MCF 10A (cell line): ENCODE measurements at regions of chr1 and their contacts with region 1.

Region 1: GRCh38 chr1:54950369-54951163 is 29.9 kb upstream of the TMEM61 start:
- DNase-seq: peak; percentile 89
- H3K4me3 Mint-ChIP-seq: no peak overlapping the region
- H3K27ac Mint-ChIP-seq: no peak overlapping the region
- H3K4me1 Mint-ChIP-seq: peaks cover 26% of the 10 kb centered on the region
- H3K27me3 Mint-ChIP-seq: no peaks in the 10 kb centered on the region
- CTCF ChIP-seq: peak; percentile 64

Region 2: DNA sequence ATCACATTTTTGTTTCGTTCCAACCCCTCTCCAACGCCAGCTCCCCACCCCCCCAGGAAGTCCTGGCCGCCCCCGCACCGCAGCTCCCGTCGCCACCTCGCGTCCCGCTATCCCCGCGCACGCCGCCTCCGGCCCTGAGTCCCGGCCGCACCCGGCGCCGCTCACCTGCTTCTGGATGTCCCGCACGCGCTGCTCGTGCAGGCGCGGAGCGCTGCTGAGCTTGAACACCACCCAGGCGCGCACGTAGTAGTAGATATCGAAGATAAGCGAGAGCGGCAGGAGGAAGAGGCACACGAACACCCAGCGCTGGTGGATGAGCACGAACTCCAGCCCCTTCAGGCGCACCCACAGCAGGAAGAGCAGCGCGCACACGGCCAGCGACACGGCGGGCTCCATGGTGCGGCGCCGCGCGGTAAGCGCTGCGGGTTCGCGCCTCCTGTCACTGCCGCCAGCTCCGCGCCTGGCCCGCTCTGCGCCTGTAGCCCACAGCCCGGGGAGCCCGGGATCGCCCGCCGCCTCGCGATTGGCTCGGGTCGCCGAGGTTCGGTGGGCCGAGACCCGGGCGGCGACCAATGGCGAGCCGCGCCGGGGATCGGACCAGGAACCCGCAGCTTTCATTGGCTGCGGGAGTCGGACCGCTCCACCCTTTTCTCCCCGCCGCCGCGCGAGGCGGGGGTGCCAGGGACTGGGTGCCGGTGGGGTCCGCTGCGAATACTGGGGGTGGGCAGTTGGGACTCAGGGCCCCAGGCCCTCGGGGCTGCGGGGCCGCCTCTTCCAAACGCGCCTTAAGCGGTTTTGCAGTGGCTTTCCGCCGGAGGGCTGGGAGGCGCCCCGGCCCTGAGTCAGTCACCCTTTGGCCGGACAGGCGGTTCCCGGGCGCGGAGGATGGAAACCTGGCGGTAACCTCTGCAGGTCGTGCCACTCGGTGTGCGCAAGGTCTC is 63.6 kb before region 1 on chr1 and contains the start of gene DHCR24:
- CTCF ChIA-PET with region 1: interaction called, 58 read pairs
- POLR2A ChIA-PET with region 1: interaction called, 65 read pairs
- intact Hi-C with region 1: loop called (anchors 1 kb)
- DNase-seq: peak; percentile 91
- H3K4me3 Mint-ChIP-seq: peak within 1 kb of the TSS; percentile 99
- H3K27ac Mint-ChIP-seq: peak within 1 kb of the TSS; percentile 90
- H3K4me1 Mint-ChIP-seq: peaks cover 49% of the 10 kb centered on the region
- H3K27me3 Mint-ChIP-seq: no peaks in the 10 kb centered on the region
- CTCF ChIP-seq: no peak
- total RNA-seq, gene DHCR24: 126 and 135 TPM in 2 replicates

Region 3: GRCh38 chr1:54934869-54935268 is 15.7 kb before region 1 on chr1:
- CTCF ChIA-PET with region 1: interaction called, 39 read pairs
- POLR2A ChIA-PET with region 1: interaction called, 5 read pairs
- intact Hi-C with region 1: no loop called
- DNase-seq: no peak
- H3K4me3 Mint-ChIP-seq: no peak overlapping the region
- H3K27ac Mint-ChIP-seq: no peak overlapping the region
- H3K4me1 Mint-ChIP-seq: peaks cover 20% of the 10 kb centered on the region
- H3K27me3 Mint-ChIP-seq: no peaks in the 10 kb centered on the region
- CTCF ChIP-seq: no peak

Region 4: DNA sequence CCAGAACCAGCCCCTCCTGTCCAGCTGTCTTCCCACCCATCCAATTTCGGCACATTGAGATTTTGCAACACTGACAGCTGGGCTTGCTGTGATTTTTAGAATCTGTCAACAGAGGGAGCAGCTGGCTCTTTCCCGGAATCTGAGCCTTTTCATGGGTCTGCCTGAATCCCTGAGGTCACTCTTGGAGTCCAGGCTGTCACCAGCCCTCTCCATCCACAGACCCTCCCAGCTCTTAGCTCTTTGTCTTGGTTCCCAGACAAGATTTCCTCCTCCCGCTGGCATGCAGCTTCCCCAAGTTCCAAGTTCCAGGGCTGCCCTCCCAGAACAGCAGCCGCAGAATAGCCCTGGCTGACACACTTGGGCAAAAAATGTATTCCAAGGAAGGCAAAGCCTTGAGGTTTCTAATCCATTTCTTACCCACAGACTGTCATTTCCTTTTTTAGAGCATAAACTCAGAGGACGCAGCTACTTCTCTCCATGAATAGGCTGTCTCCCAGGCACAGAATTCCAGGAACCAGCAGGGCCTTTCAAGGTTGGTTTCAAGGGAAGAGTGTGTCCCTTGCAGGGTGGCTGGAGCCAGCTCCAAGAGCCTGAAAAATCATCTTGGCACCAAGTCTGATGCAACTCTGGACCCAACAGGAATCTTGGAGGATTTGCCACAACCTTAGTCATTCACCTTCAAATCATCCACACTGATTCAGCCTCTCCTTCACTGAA is 22.8 kb after region 1 on chr1:
- CTCF ChIA-PET with region 1: interaction called, 17 read pairs
- POLR2A ChIA-PET with region 1: interaction called, 4 read pairs
- intact Hi-C with region 1: no loop called
- DNase-seq: peak; percentile 54
- H3K4me3 Mint-ChIP-seq: no peak overlapping the region
- H3K27ac Mint-ChIP-seq: peak overlapping the region; percentile 49
- H3K4me1 Mint-ChIP-seq: peaks cover 30% of the 10 kb centered on the region
- H3K27me3 Mint-ChIP-seq: no peaks in the 10 kb centered on the region
- CTCF ChIP-seq: peak; percentile 34

Region 5: DNA sequence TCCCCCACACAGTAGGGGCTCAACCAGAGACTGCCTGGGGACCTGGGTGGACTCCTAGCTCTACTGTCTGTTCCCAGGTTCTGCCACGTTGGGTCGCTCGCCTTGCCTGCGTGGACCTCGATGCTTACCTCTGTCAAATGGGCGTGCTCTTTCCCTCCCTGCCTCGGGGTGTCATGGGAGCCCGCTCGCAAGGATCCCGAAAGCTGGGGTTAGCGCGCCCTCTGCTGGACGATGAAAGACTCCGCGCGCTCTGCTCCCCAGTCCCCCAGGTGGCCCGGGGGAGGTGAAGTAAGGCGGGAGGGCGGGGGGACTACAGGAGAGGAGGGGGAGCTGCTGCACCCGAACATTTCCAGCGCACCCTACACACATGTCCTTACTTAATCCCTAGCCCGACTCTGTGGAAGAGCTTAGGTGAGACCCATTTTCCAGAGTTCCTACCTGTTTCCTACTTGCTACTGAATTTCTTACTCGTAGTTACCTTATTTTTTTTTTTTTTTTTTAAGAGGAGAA is 45.8 kb after region 1 on chr1:
- CTCF ChIA-PET with region 1: interaction called, 385 read pairs
- POLR2A ChIA-PET with region 1: interaction called, 7 read pairs
- intact Hi-C with region 1: loop called (anchors 1 kb)
- DNase-seq: peak; percentile 88
- H3K4me3 Mint-ChIP-seq: no peak overlapping the region
- H3K27ac Mint-ChIP-seq: no peak overlapping the region
- H3K4me1 Mint-ChIP-seq: peaks cover 5% of the 10 kb centered on the region
- H3K27me3 Mint-ChIP-seq: no peaks in the 10 kb centered on the region
- CTCF ChIP-seq: peak; percentile 80

Region 6: GRCh38 chr1:55015731-55016620 is 65.4 kb after region 1 on chr1:
- CTCF ChIA-PET with region 1: interaction called, 81 read pairs
- POLR2A ChIA-PET with region 1: no interaction called
- intact Hi-C with region 1: no loop called
- DNase-seq: no peak
- H3K4me3 Mint-ChIP-seq: no peak overlapping the region
- H3K27ac Mint-ChIP-seq: no peak overlapping the region
- H3K4me1 Mint-ChIP-seq: no peaks in the 10 kb centered on the region
- H3K27me3 Mint-ChIP-seq: peaks cover 49% of the 10 kb centered on the region
- CTCF ChIP-seq: no peak

Region 7: DNA sequence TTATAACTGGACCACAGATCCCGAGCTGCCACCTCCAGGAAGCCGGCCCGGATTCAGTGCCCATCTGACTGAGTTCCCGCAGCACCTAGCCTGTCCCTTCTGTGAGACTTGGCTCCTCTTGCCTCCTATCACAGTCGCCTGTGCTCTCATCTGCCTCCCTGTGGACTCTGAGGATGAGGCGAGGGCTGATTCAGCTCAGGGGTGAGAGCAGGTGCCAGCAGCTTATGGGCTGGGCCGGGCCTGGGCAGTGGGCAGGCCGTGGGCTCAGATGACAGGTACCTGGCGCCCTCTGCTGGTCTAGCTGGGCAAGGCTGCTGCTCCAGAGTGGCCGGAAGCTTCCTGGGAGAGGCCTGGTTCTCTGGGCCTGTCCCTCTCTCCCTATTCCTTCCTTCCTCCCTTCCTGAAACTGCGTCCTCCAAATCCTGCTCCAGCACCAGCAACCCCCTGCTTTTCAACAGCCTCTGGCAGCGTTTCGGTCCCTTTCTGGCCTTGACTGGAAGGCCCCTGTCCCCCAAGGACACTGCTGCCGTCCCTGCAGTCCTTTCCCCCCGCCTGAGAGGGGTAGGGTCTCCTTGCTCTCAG is 71.5 kb after region 1 on chr1:
- CTCF ChIA-PET with region 1: interaction called, 81 read pairs
- POLR2A ChIA-PET with region 1: interaction called, 5 read pairs
- intact Hi-C with region 1: loop called (anchors 1 kb)
- DNase-seq: peak; percentile 93
- H3K4me3 Mint-ChIP-seq: no peak overlapping the region
- H3K27ac Mint-ChIP-seq: peak overlapping the region; percentile 85
- H3K4me1 Mint-ChIP-seq: peaks cover 27% of the 10 kb centered on the region
- H3K27me3 Mint-ChIP-seq: peaks cover 3% of the 10 kb centered on the region
- CTCF ChIP-seq: peak; percentile 92